ENCODE measurements at regions of chr19 and their contacts with region 1.

Region 1: GRCh38 chr19:5048091-5048726 is 79.3 kb downstream of the KDM4B start:
- DNase-seq: peak; percentile 87
- H3K4me3 ChIP-seq: peak overlapping the region in 1 of 4 donors; percentile 1
- H3K27ac ChIP-seq: peak overlapping the region in 1 of 4 donors; percentile 37
- H3K4me1 ChIP-seq: peaks cover 0 to 25% (median 17%) of the 10 kb centered on the region in 4 donors
- H3K27me3 ChIP-seq: no peaks in the 10 kb centered on the region
- CTCF ChIP-seq: peak; percentile 89 to 99 (median 96)
- EP300 ChIP-seq: no peak
- POLR2A ChIP-seq: no peak

Region 2: GRCh38 chr19:5138606-5139582 is 90.7 kb after region 1 on chr19:
- intact Hi-C with region 1: loop called (anchors 5 kb)
- DNase-seq: no peak
- H3K4me3 ChIP-seq: no peak overlapping the region
- H3K27ac ChIP-seq: no peak overlapping the region
- H3K4me1 ChIP-seq: peaks cover 0 to 4% (median 0%) of the 10 kb centered on the region in 4 donors
- H3K27me3 ChIP-seq: no peaks in the 10 kb centered on the region
- CTCF ChIP-seq: no peak
- EP300 ChIP-seq: no peak
- POLR2A ChIP-seq: no peak

Region 3: DNA sequence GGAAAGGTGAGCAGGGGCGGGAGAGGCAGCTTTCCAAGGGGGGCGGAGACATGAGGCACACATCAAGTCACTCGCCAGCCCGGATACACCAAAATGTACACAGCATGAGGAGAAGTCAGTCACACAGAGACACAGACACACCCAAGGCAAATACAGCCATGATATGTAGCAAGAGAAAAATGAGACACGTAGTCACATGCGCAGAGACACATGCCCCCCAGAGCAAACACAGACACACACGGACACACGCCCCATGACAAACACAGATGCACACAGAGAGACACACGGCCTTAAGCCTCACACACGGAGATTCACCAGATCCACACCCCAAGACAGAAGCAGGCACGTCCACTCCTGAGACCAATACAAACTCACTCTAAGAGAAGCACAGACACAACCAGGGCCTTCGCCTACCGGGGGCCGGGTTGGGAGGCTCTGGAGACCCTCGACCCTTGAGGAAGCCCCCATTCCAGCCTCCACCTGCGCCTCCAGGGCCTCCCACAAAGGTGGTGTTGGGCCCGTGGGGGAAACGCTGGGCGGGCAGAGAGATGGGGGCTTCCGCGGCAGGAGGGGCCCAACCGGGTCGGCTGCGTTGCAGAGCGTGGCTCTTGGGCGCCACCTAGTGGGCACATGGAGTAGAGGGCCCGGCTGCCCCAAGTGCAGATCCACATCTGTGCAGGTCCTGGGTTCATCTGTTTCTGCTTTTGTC is 529.7 kb after region 1 on chr19:
- intact Hi-C with region 1: loop called (anchors 5 kb)
- DNase-seq: peak; percentile 74
- H3K4me3 ChIP-seq: no peak overlapping the region
- H3K27ac ChIP-seq: no peak overlapping the region
- H3K4me1 ChIP-seq: peaks cover 0 to 16% (median 6%) of the 10 kb centered on the region in 4 donors
- H3K27me3 ChIP-seq: no peaks in the 10 kb centered on the region
- CTCF ChIP-seq: peak; percentile 80 to 100 (median 94)
- EP300 ChIP-seq: no peak
- POLR2A ChIP-seq: no peak